K562 (cell line): ENCODE measurements at regions of chr1 and their contacts with region 1.

Region 1: DNA sequence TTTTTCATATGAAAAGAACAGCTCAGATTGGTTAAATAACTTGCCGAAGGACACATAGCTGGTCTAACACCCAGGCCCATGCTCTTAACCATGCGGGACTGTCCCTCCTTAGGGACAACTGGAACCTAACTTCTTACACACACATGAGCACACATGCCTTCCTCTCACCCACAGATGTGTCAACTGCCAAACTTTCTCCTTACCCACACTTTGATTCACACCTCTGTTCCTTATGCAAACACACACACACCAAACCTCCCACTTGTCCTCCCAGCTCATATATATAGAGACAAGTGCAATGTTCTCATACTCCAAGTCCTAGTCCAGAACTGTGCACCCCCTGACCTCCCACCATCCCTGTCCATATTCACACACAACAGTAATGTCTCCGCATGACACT is 4.3 kb downstream of the RAB25 start:
- DNase-seq: no peak
- ATAC-seq: no peak
- H3K4me3 ChIP-seq: no peak overlapping the region
- H3K27ac ChIP-seq: no peak overlapping the region
- H3K4me1 ChIP-seq: peaks cover 6 to 21% of the 10 kb centered on the region in 2 experiments; a peak in 4 of 5 replicates
- H3K27me3 ChIP-seq: no peaks in the 10 kb centered on the region
- CTCF ChIP-seq: no peak
- EP300 ChIP-seq: no peak
- POLR2A ChIP-seq: no peak
- RAD21 ChIP-seq: no peak

Region 2: DNA sequence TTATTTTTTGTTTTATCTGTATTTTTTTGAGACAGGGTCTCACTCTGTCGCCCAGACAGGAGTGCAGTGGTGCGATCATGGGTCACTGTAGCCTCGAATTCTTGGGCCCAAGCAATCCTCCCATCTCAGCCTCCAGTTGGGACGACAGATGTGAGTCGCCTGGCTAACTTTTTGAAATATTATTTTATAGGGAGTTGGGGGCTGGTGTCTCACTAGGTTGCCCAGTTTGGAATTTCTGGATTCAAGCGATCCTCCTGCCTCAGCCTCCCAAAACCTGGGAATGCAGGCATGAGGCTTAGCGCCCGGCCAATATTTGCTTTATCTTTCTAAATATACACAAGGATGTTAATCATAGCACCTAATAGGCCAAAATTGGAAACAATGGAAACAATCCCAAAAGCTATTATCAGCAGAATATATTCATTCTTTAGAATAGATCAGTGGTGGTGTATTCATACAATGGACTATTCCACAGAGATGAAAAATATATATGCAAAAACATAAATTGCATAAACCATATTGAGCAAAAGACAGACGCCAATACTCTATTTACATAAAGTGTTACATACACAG is 320.4 kb before region 1 on chr1:
- CTCF ChIA-PET with region 1: no interaction called
- POLR2A ChIA-PET with region 1: no interaction called
- in situ Hi-C with region 1: no loop called
- intact Hi-C with region 1: loop called (anchors 5 kb)
- DNase-seq: no peak
- ATAC-seq: no peak
- H3K4me3 ChIP-seq: peak overlapping the region; percentile 41
- H3K27ac ChIP-seq: peak overlapping the region; percentile 77
- H3K4me1 ChIP-seq: no peaks in the 10 kb centered on the region; a peak in 1 of 5 replicates
- H3K27me3 ChIP-seq: no peaks in the 10 kb centered on the region
- CTCF ChIP-seq: no peak
- EP300 ChIP-seq: no peak
- POLR2A ChIP-seq: no peak
- RAD21 ChIP-seq: no peak

Region 3: DNA sequence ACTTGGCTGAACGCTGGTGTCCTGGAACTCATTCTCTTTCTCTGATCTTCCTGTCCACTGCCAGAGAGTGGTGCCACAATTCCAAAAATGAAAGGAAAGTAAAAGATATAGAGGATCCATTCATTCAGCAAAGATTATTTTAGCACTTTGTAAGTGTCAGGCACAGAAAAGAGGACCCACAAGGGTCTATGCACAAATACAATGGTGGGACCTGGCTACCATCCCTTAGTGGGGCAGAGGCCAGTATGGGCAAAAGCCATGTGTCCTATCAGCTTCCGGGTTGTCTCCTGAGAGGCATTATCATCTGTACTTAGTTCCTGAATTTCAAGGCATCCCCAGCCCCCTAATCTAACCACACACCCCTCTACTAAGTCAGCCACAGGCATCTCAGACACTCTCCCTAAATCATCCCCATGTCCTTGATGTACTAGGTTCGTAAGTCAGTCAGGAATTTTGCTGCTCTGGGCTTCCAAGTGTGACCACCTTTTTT is 63.5 kb before region 1 on chr1:
- CTCF ChIA-PET with region 1: no interaction called
- POLR2A ChIA-PET with region 1: no interaction called
- in situ Hi-C with region 1: no loop called
- intact Hi-C with region 1: loop called (anchors 5 kb)
- DNase-seq: peak in 2 of 4 experiments; percentile 50 to 53
- ATAC-seq: peak; percentile 60
- H3K4me3 ChIP-seq: no peak overlapping the region
- H3K27ac ChIP-seq: peak overlapping the region; percentile 68
- H3K4me1 ChIP-seq: peaks cover 22 to 34% of the 10 kb centered on the region in 2 experiments; a peak in 4 of 5 replicates
- H3K27me3 ChIP-seq: no peaks in the 10 kb centered on the region
- CTCF ChIP-seq: peak in 2 of 3 experiments; percentile 5 to 25; a peak in 2 of 6 replicates
- EP300 ChIP-seq: no peak
- POLR2A ChIP-seq: no peak
- RAD21 ChIP-seq: peak in 1 of 2 experiments; percentile 22; a peak in 1 of 4 replicates

Region 4: DNA sequence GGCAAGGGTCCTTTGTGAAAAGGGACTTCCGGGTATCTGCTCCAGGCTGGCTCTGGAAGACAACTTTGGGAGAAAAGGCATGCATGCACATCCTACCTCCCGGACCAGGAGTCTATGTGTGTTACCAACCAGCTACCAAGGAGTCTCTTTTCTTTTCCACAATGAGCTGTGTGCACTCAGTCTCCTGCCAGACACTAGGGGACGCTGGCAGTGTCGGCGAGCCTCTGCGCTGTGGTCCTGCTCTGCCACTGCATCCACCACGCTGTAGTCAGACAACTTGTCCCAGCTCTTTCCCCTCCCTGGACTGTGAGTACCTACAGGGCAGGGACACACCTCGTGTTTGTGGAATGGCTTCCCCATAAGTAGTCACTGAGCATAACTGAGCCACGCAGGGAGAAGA is 39.3 kb before region 1 on chr1:
- CTCF ChIA-PET with region 1: interaction called, 5 read pairs
- POLR2A ChIA-PET with region 1: interaction called, 3 read pairs
- in situ Hi-C with region 1: no loop called
- intact Hi-C with region 1: loop called (anchors 5 kb)
- DNase-seq: peak; percentile 47 to 73 (median 64)
- ATAC-seq: peak; percentile 99
- H3K4me3 ChIP-seq: no peak overlapping the region
- H3K27ac ChIP-seq: no peak overlapping the region
- H3K4me1 ChIP-seq: peaks cover 4 to 6% of the 10 kb centered on the region in 2 experiments; a peak in 3 of 5 replicates
- H3K27me3 ChIP-seq: no peaks in the 10 kb centered on the region
- CTCF ChIP-seq: peak; percentile 89 to 98 (median 90)
- EP300 ChIP-seq: no peak
- POLR2A ChIP-seq: no peak
- RAD21 ChIP-seq: peak; percentile 36 to 64

Region 5: GRCh38 chr1:156045076-156045475 is 20.1 kb before region 1 on chr1:
- CTCF ChIA-PET with region 1: no interaction called
- POLR2A ChIA-PET with region 1: no interaction called
- in situ Hi-C with region 1: no loop called
- intact Hi-C with region 1: no loop called
- DNase-seq: no peak
- ATAC-seq: no peak
- H3K4me3 ChIP-seq: no peak overlapping the region
- H3K27ac ChIP-seq: no peak overlapping the region
- H3K4me1 ChIP-seq: peaks cover 4 to 5% of the 10 kb centered on the region in 2 experiments; a peak in 4 of 5 replicates
- H3K27me3 ChIP-seq: no peaks in the 10 kb centered on the region
- CTCF ChIP-seq: no peak
- EP300 ChIP-seq: no peak
- POLR2A ChIP-seq: no peak
- RAD21 ChIP-seq: no peak